Activated CD8-positive, alpha-beta T cell treated with anti-CD3 and anti-CD28 coated beads, Interleukin-2, amount 10 ng/mL, durations not matched to agents 7 days and 5 days (primary cell): ENCODE measurements at regions of chr11 and their contacts with region 1.

Region 1: GRCh38 chr11:96054870-96055705 is 131.2 kb upstream of the MTMR2 start:
- DNase-seq: no peak
- ATAC-seq: no peak
- H3K4me3 Mint-ChIP-seq: no peak overlapping the region
- H3K27ac Mint-ChIP-seq: no peak overlapping the region
- H3K4me1 Mint-ChIP-seq: peaks cover 43% of the 10 kb centered on the region
- H3K27me3 Mint-ChIP-seq: no peaks in the 10 kb centered on the region

Region 2: DNA sequence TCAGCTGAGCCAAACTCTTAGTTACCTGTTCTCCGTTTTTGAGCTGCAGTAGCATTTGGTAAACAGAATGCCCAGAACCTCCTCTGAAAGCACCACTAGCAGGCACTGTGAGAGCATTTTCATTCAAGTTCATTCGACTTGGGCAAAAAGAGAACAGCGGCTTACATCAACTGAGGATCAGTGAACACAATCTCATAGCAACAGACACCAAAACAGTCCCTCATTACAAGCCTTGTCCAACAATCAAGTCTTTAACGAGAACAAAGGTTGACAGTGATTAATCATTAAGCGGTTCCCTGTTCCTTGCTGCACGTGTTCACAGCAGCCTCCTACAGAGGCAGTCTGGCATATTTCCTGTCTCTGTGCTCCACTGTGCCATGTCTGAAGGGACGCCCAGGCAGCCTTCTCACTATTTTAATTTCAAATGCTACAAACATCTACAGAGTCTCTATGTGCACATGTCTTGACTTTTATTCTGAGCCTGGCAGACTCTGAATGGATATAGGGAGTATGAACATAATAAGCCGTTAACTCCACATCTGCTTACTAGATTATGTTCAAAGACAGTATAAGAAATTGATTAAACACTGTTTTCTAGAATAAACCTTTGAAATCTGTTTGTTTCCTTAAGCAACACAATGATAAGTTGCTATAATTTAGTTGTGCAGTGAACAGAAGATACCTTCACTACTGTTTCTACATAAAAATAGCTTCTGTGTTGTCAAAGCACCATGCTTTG is 42.8 kb before region 1 on chr11:
- CTCF ChIA-PET with region 1: interaction called, 16 read pairs
- POLR2A ChIA-PET with region 1: no interaction called
- DNase-seq: peak; percentile 58
- ATAC-seq: peak; percentile 71
- H3K4me3 Mint-ChIP-seq: peak overlapping the region; percentile 3
- H3K27ac Mint-ChIP-seq: peak overlapping the region; percentile 73
- H3K4me1 Mint-ChIP-seq: peaks cover 59% of the 10 kb centered on the region
- H3K27me3 Mint-ChIP-seq: no peaks in the 10 kb centered on the region

Region 3: DNA sequence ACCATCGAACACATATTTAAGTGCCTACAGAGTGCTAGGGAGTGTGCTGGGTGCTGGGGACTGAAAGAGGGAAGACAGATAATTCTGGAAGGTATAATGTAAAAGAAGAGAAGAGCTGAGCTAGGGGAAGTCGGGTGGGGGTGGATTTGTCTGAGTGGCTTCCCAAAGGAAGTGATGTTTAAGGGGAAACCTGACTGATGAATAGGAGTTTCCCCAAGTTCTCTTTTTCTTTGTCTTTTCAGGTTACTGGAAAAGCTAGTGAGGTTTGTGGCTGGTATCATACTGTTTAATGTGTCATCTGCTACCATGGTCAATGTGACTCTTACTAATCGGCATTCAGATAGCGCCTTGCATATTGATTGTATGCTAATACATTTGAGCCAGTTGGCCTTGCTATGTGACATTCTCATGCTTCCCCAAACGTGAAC is 20.5 kb after region 1 on chr11:
- CTCF ChIA-PET with region 1: interaction called, 16 read pairs
- POLR2A ChIA-PET with region 1: no interaction called
- DNase-seq: no peak
- ATAC-seq: no peak
- H3K4me3 Mint-ChIP-seq: no peak overlapping the region
- H3K27ac Mint-ChIP-seq: no peak overlapping the region
- H3K4me1 Mint-ChIP-seq: peaks cover 35% of the 10 kb centered on the region
- H3K27me3 Mint-ChIP-seq: no peaks in the 10 kb centered on the region

Region 4: DNA sequence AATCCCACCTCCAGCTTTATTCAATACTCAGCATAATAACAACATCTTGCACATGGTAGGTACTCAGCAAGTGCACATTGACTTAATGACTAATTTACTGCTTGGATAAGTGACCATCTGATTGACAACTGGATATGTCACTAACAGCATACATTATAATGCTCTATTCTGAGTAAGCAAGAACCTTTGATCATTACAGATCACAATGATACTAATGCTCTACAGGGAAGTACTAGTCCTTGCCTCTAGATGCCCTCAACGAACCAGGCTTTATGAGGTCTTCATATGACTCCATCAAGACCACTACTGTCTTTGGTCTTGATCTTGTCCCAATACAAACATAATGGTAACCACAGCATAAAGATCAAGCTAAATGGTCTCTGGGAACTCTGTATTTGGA is 36.4 kb after region 1 on chr11:
- CTCF ChIA-PET with region 1: interaction called, 25 read pairs
- POLR2A ChIA-PET with region 1: no interaction called
- DNase-seq: peak; percentile 35
- ATAC-seq: peak; percentile 63
- H3K4me3 Mint-ChIP-seq: no peak overlapping the region
- H3K27ac Mint-ChIP-seq: no peak overlapping the region
- H3K4me1 Mint-ChIP-seq: peaks cover 5% of the 10 kb centered on the region
- H3K27me3 Mint-ChIP-seq: no peaks in the 10 kb centered on the region

Region 5: DNA sequence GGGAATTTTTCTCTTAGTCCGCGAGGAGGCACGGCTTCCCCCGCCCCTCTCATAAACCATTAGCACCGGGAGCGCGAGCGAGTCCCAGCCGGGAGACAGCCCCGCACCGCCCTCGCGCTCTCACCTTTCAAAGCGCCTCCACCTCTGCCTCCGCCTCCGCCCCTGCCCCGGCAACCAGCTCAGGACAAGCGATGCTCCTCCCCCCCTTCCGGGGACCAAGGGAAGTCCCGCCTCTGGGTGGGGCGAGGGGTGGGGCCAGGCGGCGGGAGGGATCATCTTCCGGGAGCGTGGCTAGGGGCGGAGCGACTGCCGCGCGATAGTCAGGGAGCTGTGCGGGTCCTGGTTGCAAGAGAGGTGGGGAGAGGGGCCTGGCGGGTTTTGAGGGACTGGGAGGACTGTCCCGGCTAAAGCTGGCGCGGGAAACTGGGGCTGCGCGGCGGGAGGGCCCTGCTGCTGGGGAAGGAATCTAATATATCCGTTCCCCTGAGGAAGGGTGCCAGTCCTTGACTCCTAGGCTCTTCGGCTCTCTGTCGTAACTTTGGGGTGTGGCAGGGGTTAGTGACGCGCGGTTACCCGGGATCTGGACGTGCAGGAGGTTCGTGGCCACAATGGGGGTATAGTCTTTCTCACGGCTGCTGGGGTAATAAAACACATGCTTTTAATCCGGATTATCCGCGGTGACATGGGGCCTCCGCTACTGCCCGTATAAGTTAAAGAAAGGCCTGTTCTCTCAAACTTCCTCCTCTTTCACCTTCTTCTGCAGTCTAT is 334.8 kb after region 1 on chr11 and contains the starts of genes CCDC82 and JRKL:
- CTCF ChIA-PET with region 1: interaction called, 18 read pairs
- POLR2A ChIA-PET with region 1: interaction called, 3 read pairs
- DNase-seq: peak; percentile 98
- ATAC-seq: peak; percentile 95
- H3K4me3 Mint-ChIP-seq: peak within 1 kb of the TSS; percentile 91
- H3K27ac Mint-ChIP-seq: peak within 1 kb of the TSS; percentile 97
- H3K4me1 Mint-ChIP-seq: peaks cover 59% of the 10 kb centered on the region
- H3K27me3 Mint-ChIP-seq: no peaks in the 10 kb centered on the region
- total RNA-seq, gene CCDC82: 35.7 to 37.5 TPM
- total RNA-seq, gene JRKL: 9.4 to 10.3 TPM